AG04449 (cell line): ENCODE measurements at regions of chr7 and their contacts with region 1.

Region 1: DNA sequence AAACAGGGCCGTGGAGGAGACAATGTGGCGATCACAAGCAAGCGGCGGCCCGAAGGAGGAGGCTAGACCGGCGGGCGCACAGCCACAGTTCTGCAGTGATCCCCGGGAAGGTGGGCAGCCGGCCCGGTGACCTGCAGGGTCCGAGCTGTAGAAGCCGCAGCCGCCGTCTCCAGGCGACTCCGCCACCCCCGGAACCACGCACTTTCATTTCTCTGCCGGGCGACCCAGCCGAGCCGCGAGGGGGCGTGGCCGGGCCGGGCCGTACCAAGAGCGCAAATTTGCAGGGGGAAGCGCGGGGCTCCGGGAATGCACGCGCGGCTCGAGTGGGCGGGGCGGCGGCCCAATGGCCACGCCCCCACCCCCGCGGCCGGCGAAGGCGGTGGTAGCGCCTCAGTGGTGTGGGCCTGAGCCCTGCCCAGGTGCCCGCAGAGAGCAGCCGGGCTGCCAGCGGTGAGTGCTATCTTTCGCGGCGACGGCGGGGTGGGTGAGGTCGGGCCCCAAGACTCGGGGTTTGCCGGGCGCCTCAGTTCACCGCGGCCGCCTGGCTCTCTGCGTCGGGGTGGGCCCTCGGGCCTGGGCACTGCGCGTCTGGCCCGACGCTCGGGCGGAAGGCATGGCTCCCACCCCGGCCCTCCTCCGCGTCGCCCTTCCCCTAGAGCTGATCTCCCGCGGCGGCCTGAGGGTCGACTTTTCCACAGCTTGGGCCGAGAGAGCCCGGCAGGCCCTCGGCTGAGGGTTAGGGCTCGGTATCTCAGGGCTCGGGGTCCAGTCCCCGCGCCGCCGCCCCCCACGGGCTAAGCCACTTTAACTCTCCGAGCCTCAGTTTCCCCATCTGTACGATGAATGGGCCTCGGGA is at the start of gene POR:
- DNase-seq: peak; percentile 40
- H3K4me3 ChIP-seq: peak within 1 kb of the TSS; percentile 90
- CTCF ChIP-seq: no peak

Region 2: GRCh38 chr7:75925717-75926435 is 10.9 kb after region 1 on chr7:
- CTCF ChIA-PET with region 1: interaction called, 12 read pairs
- POLR2A ChIA-PET with region 1: interaction called, 8 read pairs
- DNase-seq: no peak
- H3K4me3 ChIP-seq: no peak overlapping the region
- CTCF ChIP-seq: no peak

Region 3: DNA sequence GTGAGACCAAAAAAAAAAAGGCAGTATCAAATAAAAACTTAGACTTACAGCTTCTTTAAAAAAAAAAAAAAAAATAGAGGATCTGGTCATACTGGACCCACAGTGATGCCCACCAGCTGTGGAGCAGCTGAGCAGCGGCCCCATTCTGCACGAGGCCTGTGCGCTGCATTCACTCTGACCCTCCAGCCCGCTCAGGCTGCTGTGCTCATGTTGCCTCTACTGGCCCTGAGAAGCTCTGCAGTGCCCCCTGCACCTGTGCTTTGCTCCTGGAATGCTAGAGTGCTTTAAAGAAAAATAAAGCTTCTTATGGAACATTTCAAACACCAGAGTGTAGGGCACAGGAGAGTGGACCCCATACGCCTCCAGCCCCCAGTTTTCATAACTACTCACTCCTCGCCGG is 46.3 kb after region 1 on chr7:
- CTCF ChIA-PET with region 1: no interaction called
- POLR2A ChIA-PET with region 1: interaction called, 10 read pairs
- DNase-seq: no peak
- H3K4me3 ChIP-seq: no peak overlapping the region
- CTCF ChIP-seq: no peak